ENCODE measurements at regions of chr4 and their contacts with region 1.

Region 1: DNA sequence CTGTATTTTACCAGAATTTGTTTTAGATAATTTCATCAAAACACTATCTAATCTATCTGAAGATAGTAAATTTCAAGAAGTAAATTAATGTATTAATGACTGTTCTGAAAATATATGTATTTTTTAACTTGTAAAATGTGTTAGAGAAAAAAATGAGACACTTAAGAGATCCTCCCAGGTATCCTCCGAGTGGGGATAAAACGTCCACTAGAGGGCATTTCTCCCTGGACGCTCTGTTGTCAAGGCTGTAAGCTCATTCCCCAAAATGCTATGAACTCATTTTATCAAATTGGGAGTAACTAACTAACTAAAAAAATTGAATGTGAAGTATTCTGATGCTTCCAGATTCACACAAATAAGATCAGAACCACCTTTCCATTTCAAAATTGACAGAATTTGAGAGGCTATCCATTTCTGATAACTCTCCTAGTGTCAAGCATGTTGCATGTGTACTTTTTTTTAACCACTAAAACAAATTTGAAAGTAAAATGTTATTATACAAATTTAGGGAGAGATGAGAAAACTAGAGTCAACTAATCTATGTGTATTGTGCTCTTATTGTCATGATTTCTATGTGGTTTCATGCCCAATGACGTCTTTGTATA is 337.3 kb upstream of the HS3ST1 start:
- DNase-seq: peak; percentile 32
- H3K4me3 Mint-ChIP-seq: no peak overlapping the region
- H3K27ac Mint-ChIP-seq: no peak overlapping the region
- H3K4me1 Mint-ChIP-seq: no peaks in the 10 kb centered on the region
- H3K27me3 Mint-ChIP-seq: no peaks in the 10 kb centered on the region
- CTCF ChIP-seq: peak; percentile 67

Region 2: GRCh38 chr4:11821772-11822430 is 56.0 kb after region 1 on chr4:
- CTCF ChIA-PET with region 1: no interaction called
- intact Hi-C with region 1: no loop called
- DNase-seq: no peak
- H3K4me3 Mint-ChIP-seq: no peak overlapping the region
- H3K27ac Mint-ChIP-seq: no peak overlapping the region
- H3K4me1 Mint-ChIP-seq: no peaks in the 10 kb centered on the region
- H3K27me3 Mint-ChIP-seq: no peaks in the 10 kb centered on the region
- CTCF ChIP-seq: no peak

Region 3: GRCh38 chr4:11954093-11954492 is 188.1 kb after region 1 on chr4:
- CTCF ChIA-PET with region 1: no interaction called
- intact Hi-C with region 1: loop called (anchors 5 kb)
- DNase-seq: peak; percentile 22
- H3K4me3 Mint-ChIP-seq: no peak overlapping the region
- H3K27ac Mint-ChIP-seq: no peak overlapping the region
- H3K4me1 Mint-ChIP-seq: peaks cover 6% of the 10 kb centered on the region
- H3K27me3 Mint-ChIP-seq: no peaks in the 10 kb centered on the region
- CTCF ChIP-seq: peak; percentile 28

Region 4: GRCh38 chr4:12409507-12410190 is 643.7 kb after region 1 on chr4:
- CTCF ChIA-PET with region 1: no interaction called
- intact Hi-C with region 1: loop called (anchors 5 kb)
- DNase-seq: no peak
- H3K4me3 Mint-ChIP-seq: no peak overlapping the region
- H3K27ac Mint-ChIP-seq: no peak overlapping the region
- H3K4me1 Mint-ChIP-seq: no peaks in the 10 kb centered on the region
- H3K27me3 Mint-ChIP-seq: no peaks in the 10 kb centered on the region
- CTCF ChIP-seq: no peak